Activated B cell treated with CpG ODN at 0.5 μM for 24 hours (primary cell): ENCODE measurements at regions of chr5 and their contacts with region 1.

Region 1: GRCh38 chr5:69093771-69094482 is at the start of gene SLC30A5:
- DNase-seq: peak; percentile 89
- ATAC-seq: peak; percentile 98
- H3K4me3 Mint-ChIP-seq: peak within 1 kb of the TSS; percentile 92
- H3K27ac Mint-ChIP-seq: peak within 1 kb of the TSS; percentile 89
- H3K4me1 Mint-ChIP-seq: peaks cover 32% of the 10 kb centered on the region
- H3K27me3 Mint-ChIP-seq: no peaks in the 10 kb centered on the region
- CTCF ChIP-seq: peak; percentile 57
- total RNA-seq, gene SLC30A5: 23.2 and 27.5 TPM in 2 replicates

Region 2: GRCh38 chr5:69042915-69043658 is 50.8 kb before region 1 on chr5:
- CTCF ChIA-PET with region 1: interaction called, 3 read pairs
- POLR2A ChIA-PET with region 1: interaction called, 3 read pairs
- intact Hi-C with region 1: loop called (anchors 2 kb)
- DNase-seq: peak; percentile 29
- ATAC-seq: peak; percentile 96
- H3K4me3 Mint-ChIP-seq: peak overlapping the region; percentile 84
- H3K27ac Mint-ChIP-seq: peak overlapping the region; percentile 79
- H3K4me1 Mint-ChIP-seq: no peaks in the 10 kb centered on the region
- H3K27me3 Mint-ChIP-seq: no peaks in the 10 kb centered on the region
- CTCF ChIP-seq: peak; percentile 27

Region 3: DNA sequence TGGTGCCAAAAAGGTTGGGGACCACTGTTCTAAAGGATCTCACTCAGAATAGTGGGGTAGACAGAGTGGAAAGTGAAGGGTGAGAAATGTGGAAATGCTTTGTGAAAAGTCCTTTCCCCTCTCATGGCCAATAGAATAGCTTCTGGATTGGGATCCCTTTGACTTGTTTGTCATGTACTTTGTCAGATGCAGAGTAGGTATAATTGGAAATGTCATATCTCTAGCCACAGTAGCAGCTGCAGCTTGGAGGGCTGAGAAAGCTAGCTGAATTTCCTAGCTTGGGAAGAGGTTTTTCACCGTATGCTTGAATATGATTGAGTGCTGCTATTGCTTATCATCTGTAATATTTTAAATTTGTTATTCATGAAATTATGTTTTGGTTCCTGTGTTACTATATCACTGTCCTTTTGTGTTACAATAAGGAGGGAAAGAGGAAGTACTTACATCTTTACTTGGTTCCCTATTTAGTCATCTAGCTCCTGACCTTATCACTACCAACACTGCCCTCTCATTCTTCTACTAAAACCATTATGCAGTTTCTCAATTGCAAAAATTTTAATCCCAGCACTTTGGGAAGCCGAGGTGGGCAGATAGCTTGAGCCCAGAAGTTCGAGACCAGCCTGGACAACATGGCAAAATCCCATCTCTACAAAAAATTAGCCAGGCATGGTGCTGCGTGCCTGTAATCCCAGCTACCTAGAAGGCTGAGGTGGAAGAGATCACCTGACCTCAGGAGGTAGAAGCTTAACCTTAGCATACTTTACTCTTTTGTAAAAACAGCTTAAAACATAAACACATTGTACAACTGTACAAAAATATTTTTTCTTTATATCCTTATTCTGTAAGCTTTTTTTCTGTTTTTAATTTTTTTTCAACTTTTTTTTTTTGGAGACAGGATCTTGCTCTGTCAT is 12.3 kb after region 1 on chr5:
- CTCF ChIA-PET with region 1: interaction called, 14 read pairs
- POLR2A ChIA-PET with region 1: interaction called, 11 read pairs
- intact Hi-C with region 1: no loop called
- DNase-seq: no peak
- ATAC-seq: peak; percentile 97
- H3K4me3 Mint-ChIP-seq: no peak overlapping the region
- H3K27ac Mint-ChIP-seq: peak overlapping the region; percentile 79
- H3K4me1 Mint-ChIP-seq: peaks cover 14% of the 10 kb centered on the region
- H3K27me3 Mint-ChIP-seq: no peaks in the 10 kb centered on the region
- CTCF ChIP-seq: no peak

Region 4: DNA sequence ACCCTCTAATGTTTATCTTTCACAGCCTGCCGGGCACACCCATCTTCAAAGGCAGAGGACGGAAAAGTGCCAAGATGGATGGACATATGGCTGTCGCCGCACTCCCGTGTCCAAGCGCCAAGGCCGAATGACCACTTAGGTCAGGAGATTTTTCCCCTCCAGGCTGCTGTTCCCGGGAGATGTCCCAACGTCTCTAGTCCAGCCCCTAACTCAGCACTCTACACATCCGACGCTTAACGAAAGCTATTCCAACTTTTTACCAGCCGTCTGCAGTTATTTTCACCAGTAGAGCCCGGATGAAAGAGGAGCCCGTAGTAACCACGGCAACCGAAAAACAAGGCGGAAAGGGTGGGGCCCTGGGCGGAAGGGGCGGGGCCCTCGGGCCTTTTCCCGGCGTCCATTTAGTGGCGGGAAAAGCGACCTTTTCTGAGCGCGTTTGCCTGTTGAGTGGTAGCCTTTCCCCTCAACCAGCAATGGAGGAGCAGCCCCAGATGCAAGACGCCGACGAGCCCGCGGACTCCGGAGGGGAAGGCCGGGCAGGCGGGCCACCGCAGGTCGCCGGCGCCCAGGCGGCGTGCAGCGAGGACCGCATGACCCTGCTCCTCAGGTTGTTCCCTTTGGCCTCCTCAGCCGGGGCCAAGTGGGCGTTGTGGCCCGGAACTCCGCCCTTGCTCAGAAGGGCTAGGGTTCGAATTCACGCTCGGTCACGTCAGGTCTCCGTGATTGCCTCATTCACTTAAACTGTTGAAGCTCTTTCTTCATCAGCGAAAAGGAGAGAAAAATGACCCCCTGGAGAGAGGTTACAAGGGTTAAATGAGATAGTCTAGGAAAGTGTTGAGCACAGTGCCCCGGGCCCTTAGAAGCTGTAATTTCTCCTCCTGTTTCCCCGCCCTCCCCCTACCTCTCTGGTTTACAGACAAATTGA is 95.5 kb after region 1 on chr5 and contains the start of gene CENPH:
- CTCF ChIA-PET with region 1: no interaction called
- POLR2A ChIA-PET with region 1: no interaction called
- intact Hi-C with region 1: loop called (anchors 1 kb)
- DNase-seq: peak; percentile 88
- ATAC-seq: peak; percentile 92
- H3K4me3 Mint-ChIP-seq: peak within 1 kb of the TSS; percentile 92
- H3K27ac Mint-ChIP-seq: peak within 1 kb of the TSS; percentile 90
- H3K4me1 Mint-ChIP-seq: peaks cover 14% of the 10 kb centered on the region
- H3K27me3 Mint-ChIP-seq: no peaks in the 10 kb centered on the region
- CTCF ChIP-seq: no peak
- total RNA-seq, gene CENPH: 13.0 and 13.5 TPM in 2 replicates

Region 5: DNA sequence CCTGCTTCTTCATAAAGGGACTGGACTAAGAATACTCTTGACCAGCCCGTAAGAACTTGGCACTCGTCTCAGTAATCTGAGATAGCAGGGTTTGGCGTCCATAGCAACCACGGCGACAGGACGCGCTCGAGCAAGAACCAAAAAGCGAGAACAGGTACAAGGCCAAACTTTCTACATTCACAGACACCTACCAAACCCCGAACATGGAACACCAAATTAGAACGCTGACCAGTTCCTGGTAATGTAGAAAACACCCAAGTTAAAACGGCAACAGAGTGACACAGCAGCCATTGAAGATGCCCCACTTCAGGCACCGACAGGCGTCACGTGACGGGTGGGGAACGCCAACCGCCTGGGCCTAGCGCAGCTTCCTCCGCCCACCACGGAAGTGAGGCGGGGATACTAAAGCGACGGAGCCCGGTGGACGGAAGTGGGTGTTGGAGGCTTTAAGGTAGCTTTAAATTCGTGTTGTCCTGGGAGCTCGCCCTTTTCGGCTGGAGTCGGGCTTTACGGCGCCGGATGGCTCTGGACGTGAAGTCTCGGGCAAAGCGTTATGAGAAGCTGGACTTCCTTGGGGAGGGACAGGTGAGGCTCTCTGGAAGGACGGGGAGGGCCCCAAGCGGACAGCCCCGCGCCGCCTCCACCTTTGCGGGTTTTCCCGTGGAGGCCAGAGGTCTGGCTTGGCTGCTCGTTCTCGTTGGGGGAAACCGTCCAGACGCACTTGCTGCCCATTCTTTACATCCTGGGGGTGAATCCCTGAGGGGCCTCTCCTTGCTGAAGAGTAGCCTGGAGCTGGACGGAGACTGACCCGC is 140.7 kb after region 1 on chr5 and contains the start of gene CDK7:
- CTCF ChIA-PET with region 1: interaction called, 6 read pairs
- POLR2A ChIA-PET with region 1: interaction called, 3 read pairs
- intact Hi-C with region 1: loop called (anchors 1 kb)
- DNase-seq: peak; percentile 88
- ATAC-seq: peak; percentile 100
- H3K4me3 Mint-ChIP-seq: peak within 1 kb of the TSS; percentile 97
- H3K27ac Mint-ChIP-seq: peak within 1 kb of the TSS; percentile 88
- H3K4me1 Mint-ChIP-seq: peaks cover 35% of the 10 kb centered on the region
- H3K27me3 Mint-ChIP-seq: no peaks in the 10 kb centered on the region
- CTCF ChIP-seq: no peak
- total RNA-seq, gene CDK7: 27.1 and 33.5 TPM in 2 replicates

Region 6: DNA sequence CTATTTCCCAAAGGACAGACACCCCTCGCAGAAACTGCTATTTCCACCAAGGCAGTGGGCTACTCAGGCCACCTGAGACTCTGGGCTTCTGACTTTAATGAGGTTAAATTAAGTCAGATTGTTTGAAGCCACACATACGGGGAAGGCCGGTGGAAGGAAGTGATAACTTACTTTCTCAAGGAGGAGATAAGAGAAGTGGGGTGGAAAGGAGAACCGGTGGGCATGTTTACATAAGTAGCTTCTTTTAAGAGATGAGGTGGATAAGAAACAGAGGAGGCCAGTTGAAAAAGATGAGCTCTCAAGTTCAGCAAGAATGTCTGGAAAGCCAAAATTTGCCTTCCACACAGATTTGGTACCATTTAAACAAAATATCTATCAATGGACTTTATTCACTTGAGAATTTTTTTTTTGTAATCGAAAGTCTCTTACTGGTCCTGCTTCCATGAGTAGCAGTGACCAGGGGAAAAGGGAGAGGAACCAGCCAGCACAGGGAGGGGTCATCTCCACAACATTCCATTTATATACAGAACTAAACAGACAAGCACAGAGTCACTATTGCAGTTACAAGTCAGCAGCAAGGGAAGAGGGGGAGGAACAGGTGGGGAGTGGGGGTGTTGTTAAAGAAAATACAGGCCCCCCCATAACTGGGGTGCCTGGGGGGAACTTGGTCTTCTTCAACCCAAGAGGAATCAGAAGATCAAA is 218.7 kb after region 1 on chr5:
- CTCF ChIA-PET with region 1: no interaction called
- POLR2A ChIA-PET with region 1: no interaction called
- intact Hi-C with region 1: no loop called
- DNase-seq: no peak
- ATAC-seq: no peak
- H3K4me3 Mint-ChIP-seq: no peak overlapping the region
- H3K27ac Mint-ChIP-seq: no peak overlapping the region
- H3K4me1 Mint-ChIP-seq: no peaks in the 10 kb centered on the region
- H3K27me3 Mint-ChIP-seq: no peaks in the 10 kb centered on the region
- CTCF ChIP-seq: no peak

Region 7: DNA sequence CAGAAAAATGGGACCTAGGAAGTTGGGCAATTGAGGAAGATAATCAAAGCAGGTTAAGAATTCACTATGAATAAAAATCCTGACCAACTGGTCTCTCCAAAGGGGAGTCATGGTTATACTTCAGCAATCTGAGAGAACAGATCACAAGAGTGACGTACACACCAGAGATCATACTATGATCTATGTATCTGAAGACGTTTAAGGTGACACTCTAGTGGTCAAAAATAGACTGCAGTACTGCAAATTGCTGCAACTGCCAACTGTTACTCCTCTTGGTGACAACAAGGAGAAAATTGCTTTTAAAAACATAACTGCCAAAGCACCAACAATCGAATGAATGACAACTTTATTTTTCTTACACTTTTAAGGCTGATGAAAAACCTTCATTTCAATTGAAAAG is 270.5 kb after region 1 on chr5:
- CTCF ChIA-PET with region 1: interaction called, 8 read pairs
- POLR2A ChIA-PET with region 1: no interaction called
- intact Hi-C with region 1: loop called (anchors 1 kb)
- DNase-seq: no peak
- ATAC-seq: no peak
- H3K4me3 Mint-ChIP-seq: no peak overlapping the region
- H3K27ac Mint-ChIP-seq: no peak overlapping the region
- H3K4me1 Mint-ChIP-seq: peaks cover 29% of the 10 kb centered on the region
- H3K27me3 Mint-ChIP-seq: no peaks in the 10 kb centered on the region
- CTCF ChIP-seq: no peak

Region 8: DNA sequence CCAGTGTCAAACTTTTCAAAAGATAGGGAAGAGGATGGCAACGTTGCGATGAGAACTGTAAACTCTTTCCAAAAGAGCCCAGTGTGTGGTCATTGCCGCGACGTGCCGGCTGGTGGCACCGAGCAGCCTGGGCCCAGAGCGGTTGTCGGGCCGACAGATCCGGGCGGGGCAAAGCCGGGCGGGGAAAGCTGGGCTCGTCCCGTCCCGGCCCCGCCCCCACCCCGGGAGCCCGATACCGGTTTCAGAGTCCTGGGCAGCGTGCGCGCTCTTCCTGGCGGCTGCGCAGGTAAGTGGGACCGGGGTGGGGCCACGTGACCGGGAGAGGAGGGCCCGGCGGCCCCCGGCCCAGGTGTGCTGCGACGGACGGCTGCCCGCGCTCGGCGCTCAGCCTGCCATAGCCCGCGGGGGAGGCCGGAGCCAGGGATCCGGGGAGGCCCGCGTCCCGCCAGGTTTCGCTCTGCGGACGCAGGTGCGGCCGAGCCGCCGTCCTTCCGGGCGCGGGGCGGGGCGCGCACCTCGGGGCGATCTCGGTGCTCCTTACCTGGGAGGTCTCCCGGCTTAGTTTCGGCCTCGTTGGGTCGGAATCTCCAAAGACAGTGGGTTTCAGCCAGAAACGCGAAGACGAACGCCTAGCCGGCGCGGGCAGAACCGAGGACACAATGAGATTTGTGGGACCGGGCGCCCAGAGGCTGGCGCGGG is 321.1 kb after region 1 on chr5 and contains the start of gene MARVELD2:
- CTCF ChIA-PET with region 1: no interaction called
- POLR2A ChIA-PET with region 1: no interaction called
- intact Hi-C with region 1: loop called (anchors 1 kb)
- DNase-seq: peak; percentile 33
- ATAC-seq: peak; percentile 87
- H3K4me3 Mint-ChIP-seq: peak within 1 kb of the TSS; percentile 69
- H3K27ac Mint-ChIP-seq: no peak within 1 kb of the TSS
- H3K4me1 Mint-ChIP-seq: peaks cover 8% of the 10 kb centered on the region
- H3K27me3 Mint-ChIP-seq: no peaks in the 10 kb centered on the region
- CTCF ChIP-seq: no peak
- total RNA-seq, gene MARVELD2: 1.2 and 1.6 TPM in 2 replicates